ENCODE measurements at regions of chrX and their contacts with region 1.

Region 1: GRCh38 chrX:83469551-83469950 is 38.5 kb upstream of the POU3F4 start:
- DNase-seq: peak; percentile 15
- ATAC-seq: no peak
- H3K4me3 ChIP-seq: no peak overlapping the region
- H3K27ac ChIP-seq: no peak overlapping the region
- H3K4me1 ChIP-seq: no peaks in the 10 kb centered on the region
- H3K27me3 ChIP-seq: no peaks in the 10 kb centered on the region
- CTCF ChIP-seq: peak; percentile 58

Region 2: GRCh38 chrX:83529950-83530349 is 60.4 kb after region 1 on chrX:
- CTCF ChIA-PET with region 1: no interaction called
- POLR2A ChIA-PET with region 1: no interaction called
- in situ Hi-C with region 1: no loop called
- intact Hi-C with region 1: loop called (anchors 2 kb)
- DNase-seq: no peak
- ATAC-seq: no peak
- H3K4me3 ChIP-seq: no peak overlapping the region
- H3K27ac ChIP-seq: no peak overlapping the region
- H3K4me1 ChIP-seq: no peaks in the 10 kb centered on the region
- H3K27me3 ChIP-seq: no peaks in the 10 kb centered on the region
- CTCF ChIP-seq: no peak

Region 3: GRCh38 chrX:83630662-83631061 is 161.1 kb after region 1 on chrX:
- CTCF ChIA-PET with region 1: no interaction called
- POLR2A ChIA-PET with region 1: no interaction called
- in situ Hi-C with region 1: no loop called
- intact Hi-C with region 1: loop called (anchors 2 kb)
- DNase-seq: no peak
- ATAC-seq: no peak
- H3K4me3 ChIP-seq: no peak overlapping the region
- H3K27ac ChIP-seq: no peak overlapping the region
- H3K4me1 ChIP-seq: no peaks in the 10 kb centered on the region
- H3K27me3 ChIP-seq: no peaks in the 10 kb centered on the region
- CTCF ChIP-seq: no peak

Region 4: DNA sequence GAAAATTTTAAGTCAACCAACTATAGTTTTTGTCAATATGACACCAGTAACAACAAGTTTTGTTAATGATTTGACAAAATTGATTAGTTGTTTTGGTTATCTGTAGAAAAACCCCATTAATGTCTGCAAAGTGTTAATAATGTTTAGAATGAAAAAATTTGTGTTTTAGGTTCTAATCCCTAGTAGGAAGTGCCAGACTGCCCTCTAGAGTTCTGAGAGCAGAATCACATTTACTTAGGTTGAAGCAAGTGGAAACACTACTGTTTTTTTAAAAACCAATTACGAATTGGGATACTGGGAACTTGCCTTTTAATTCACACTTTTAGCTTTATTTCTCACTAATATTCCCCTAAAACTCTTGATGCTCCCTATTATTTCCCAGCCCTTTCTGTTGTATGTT is 290.3 kb after region 1 on chrX:
- CTCF ChIA-PET with region 1: no interaction called
- POLR2A ChIA-PET with region 1: no interaction called
- in situ Hi-C with region 1: no loop called
- intact Hi-C with region 1: loop called (anchors 5 kb)
- DNase-seq: no peak
- ATAC-seq: no peak
- H3K4me3 ChIP-seq: no peak overlapping the region
- H3K27ac ChIP-seq: no peak overlapping the region
- H3K4me1 ChIP-seq: no peaks in the 10 kb centered on the region
- H3K27me3 ChIP-seq: no peaks in the 10 kb centered on the region
- CTCF ChIP-seq: peak; percentile 57; the same call in 1 of the 2 replicates

Measured in Panc1 (cell line).